ENCODE measurements at regions of chr1 and their contacts with region 1.

Region 1: DNA sequence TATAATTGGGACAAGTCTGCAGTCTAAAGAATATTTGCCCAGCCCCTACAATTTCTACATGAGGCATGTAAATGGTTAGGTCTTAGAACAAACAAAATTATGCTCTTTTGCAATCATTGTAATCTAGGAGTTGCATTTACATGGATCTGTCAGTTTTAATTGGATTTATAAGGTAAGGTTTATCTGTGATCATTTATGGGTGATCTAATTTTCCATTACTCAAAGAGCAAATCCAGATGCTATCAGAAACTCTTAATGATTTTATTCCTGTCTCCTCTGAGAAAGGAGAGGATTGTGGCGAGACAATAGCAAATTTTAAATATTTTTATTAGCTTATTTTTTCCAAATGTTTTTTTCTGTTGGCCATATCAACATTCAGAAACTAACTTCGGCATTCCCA is 14.1 kb upstream of the NEGR1 start:
- DNase-seq: no peak
- ATAC-seq: no peak
- H3K4me3 ChIP-seq: no peak overlapping the region
- H3K4me3 Mint-ChIP-seq: no peak overlapping the region
- H3K27ac ChIP-seq: no peak overlapping the region
- H3K27ac Mint-ChIP-seq: no peak overlapping the region
- H3K4me1 ChIP-seq: no peaks in the 10 kb centered on the region
- H3K4me1 Mint-ChIP-seq: no peaks in the 10 kb centered on the region
- H3K27me3 ChIP-seq: no peaks in the 10 kb centered on the region
- H3K27me3 Mint-ChIP-seq: peaks cover 2% of the 10 kb centered on the region
- CTCF ChIP-seq: no peak

Region 2: GRCh38 chr1:72094209-72094608 is 202.3 kb before region 1 on chr1:
- CTCF ChIA-PET with region 1: no interaction called
- POLR2A ChIA-PET with region 1: no interaction called
- intact Hi-C with region 1: no loop called
- DNase-seq: no peak
- ATAC-seq: no peak
- H3K4me3 ChIP-seq: no peak overlapping the region
- H3K4me3 Mint-ChIP-seq: no peak overlapping the region
- H3K27ac ChIP-seq: no peak overlapping the region
- H3K27ac Mint-ChIP-seq: no peak overlapping the region
- H3K4me1 ChIP-seq: no peaks in the 10 kb centered on the region
- H3K4me1 Mint-ChIP-seq: no peaks in the 10 kb centered on the region
- H3K27me3 ChIP-seq: no peaks in the 10 kb centered on the region
- H3K27me3 Mint-ChIP-seq: no peaks in the 10 kb centered on the region
- CTCF ChIP-seq: no peak

Region 3: GRCh38 chr1:72341661-72342060 is 45.2 kb after region 1 on chr1:
- CTCF ChIA-PET with region 1: no interaction called
- POLR2A ChIA-PET with region 1: no interaction called
- intact Hi-C with region 1: loop called in 1 of 2 experiments (anchors 1 kb)
- DNase-seq: no peak
- ATAC-seq: no peak
- H3K4me3 ChIP-seq: no peak overlapping the region
- H3K4me3 Mint-ChIP-seq: no peak overlapping the region
- H3K27ac ChIP-seq: no peak overlapping the region
- H3K27ac Mint-ChIP-seq: no peak overlapping the region
- H3K4me1 ChIP-seq: no peaks in the 10 kb centered on the region
- H3K4me1 Mint-ChIP-seq: no peaks in the 10 kb centered on the region
- H3K27me3 ChIP-seq: no peaks in the 10 kb centered on the region
- H3K27me3 Mint-ChIP-seq: no peaks in the 10 kb centered on the region
- CTCF ChIP-seq: no peak

Region 4: GRCh38 chr1:72355899-72356298 is 59.4 kb after region 1 on chr1:
- CTCF ChIA-PET with region 1: no interaction called
- POLR2A ChIA-PET with region 1: no interaction called
- intact Hi-C with region 1: loop called in 1 of 2 experiments (anchors 1 kb)
- DNase-seq: no peak
- ATAC-seq: no peak
- H3K4me3 ChIP-seq: no peak overlapping the region
- H3K4me3 Mint-ChIP-seq: no peak overlapping the region
- H3K27ac ChIP-seq: no peak overlapping the region
- H3K27ac Mint-ChIP-seq: no peak overlapping the region
- H3K4me1 ChIP-seq: no peaks in the 10 kb centered on the region
- H3K4me1 Mint-ChIP-seq: no peaks in the 10 kb centered on the region
- H3K27me3 ChIP-seq: no peaks in the 10 kb centered on the region
- H3K27me3 Mint-ChIP-seq: no peaks in the 10 kb centered on the region
- CTCF ChIP-seq: no peak

Region 5: GRCh38 chr1:72412286-72412685 is 115.8 kb after region 1 on chr1:
- CTCF ChIA-PET with region 1: no interaction called
- POLR2A ChIA-PET with region 1: no interaction called
- intact Hi-C with region 1: no loop called
- DNase-seq: no peak
- ATAC-seq: no peak
- H3K4me3 ChIP-seq: no peak overlapping the region
- H3K4me3 Mint-ChIP-seq: no peak overlapping the region
- H3K27ac ChIP-seq: no peak overlapping the region
- H3K27ac Mint-ChIP-seq: no peak overlapping the region
- H3K4me1 ChIP-seq: no peaks in the 10 kb centered on the region
- H3K4me1 Mint-ChIP-seq: no peaks in the 10 kb centered on the region
- H3K27me3 ChIP-seq: no peaks in the 10 kb centered on the region
- H3K27me3 Mint-ChIP-seq: no peaks in the 10 kb centered on the region
- CTCF ChIP-seq: no peak

Region 6: DNA sequence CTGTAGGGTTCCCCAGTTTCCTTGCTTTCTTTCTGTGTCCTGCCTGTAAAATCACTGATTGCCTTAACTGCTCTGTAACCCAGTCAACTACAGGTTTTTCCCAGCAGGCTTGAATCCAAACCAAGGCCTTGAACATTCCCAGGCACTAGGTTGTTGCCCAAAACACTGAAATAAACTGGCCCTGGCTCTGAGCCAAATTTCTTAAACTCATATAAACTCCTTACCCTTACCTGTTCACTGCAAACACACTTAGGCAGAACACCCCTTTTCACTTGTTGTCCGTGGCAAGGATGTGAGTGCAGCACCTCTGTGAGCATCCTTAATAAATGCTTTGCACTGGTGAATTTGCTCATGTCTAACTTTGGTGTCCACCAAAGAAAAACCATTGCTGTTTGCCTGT is 1348.2 kb after region 1 on chr1:
- CTCF ChIA-PET with region 1: no interaction called
- POLR2A ChIA-PET with region 1: no interaction called
- intact Hi-C with region 1: no loop called
- DNase-seq: no peak
- ATAC-seq: no peak
- H3K4me3 ChIP-seq: no peak overlapping the region
- H3K4me3 Mint-ChIP-seq: no peak overlapping the region
- H3K27ac ChIP-seq: no peak overlapping the region
- H3K27ac Mint-ChIP-seq: no peak overlapping the region
- H3K4me1 ChIP-seq: no peaks in the 10 kb centered on the region
- H3K4me1 Mint-ChIP-seq: no peaks in the 10 kb centered on the region
- H3K27me3 ChIP-seq: no peaks in the 10 kb centered on the region
- H3K27me3 Mint-ChIP-seq: no peaks in the 10 kb centered on the region
- CTCF ChIP-seq: no peak